PC-3 (cell line): ENCODE measurements at regions of chr10 and their contacts with region 1.

Region 1: DNA sequence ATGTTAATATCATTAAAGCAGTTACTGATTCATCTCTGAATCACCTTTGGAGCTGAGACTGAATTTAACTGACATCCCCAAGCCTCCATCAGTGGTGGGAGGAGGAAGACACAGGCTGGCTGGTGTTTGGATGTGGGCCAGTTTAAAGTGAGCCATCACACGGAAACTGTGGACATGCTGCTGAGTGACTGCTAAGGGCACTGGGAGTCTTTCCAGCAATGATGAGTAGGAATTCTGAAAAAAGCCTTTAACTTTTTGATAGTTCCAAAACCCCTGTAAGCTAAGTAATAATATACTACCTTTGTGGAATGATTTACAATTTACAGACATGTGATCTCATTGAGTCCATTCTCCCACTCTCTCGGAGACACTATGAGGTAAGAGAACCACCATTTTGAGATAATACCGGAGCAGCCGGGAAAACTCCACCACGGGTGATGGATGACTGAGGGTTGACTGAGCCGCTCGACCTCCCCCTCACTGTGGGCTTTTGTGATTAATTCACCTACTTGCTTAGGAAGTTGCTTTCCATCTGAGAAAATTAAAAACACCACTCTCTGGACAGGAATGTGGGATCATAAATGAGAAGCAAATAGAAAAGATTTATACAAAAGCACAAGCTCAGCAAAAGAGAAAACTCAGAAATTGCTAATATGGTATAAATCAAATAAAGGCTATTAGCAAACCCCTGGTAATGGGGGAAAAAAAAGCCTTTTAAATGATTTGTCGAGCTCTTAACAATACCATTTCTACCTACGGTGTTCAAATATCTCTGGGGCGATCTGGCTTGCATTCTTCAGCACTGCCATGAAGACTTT is 194.8 kb downstream of the FANK1 start:
- DNase-seq: peak; percentile 94
- ATAC-seq: peak; percentile 88
- H3K4me3 ChIP-seq: peak overlapping the region; percentile 36; the same call in 1 of the 2 replicates
- H3K27ac ChIP-seq: peak overlapping the region; percentile 98
- H3K4me1 ChIP-seq: peaks cover 56% of the 10 kb centered on the region
- H3K27me3 ChIP-seq: no peaks in the 10 kb centered on the region
- CTCF ChIP-seq: no peak

Region 2: GRCh38 chr10:125940515-125940914 is 150.6 kb before region 1 on chr10:
- CTCF ChIA-PET with region 1: no interaction called
- POLR2A ChIA-PET with region 1: no interaction called
- intact Hi-C with region 1: no loop called
- DNase-seq: no peak
- ATAC-seq: no peak
- H3K4me3 ChIP-seq: no peak overlapping the region
- H3K27ac ChIP-seq: no peak overlapping the region
- H3K4me1 ChIP-seq: 0 out of 2 replicates have a peak, but pooled peaks cover 3% of the 10 kb centered on the region
- H3K27me3 ChIP-seq: no peaks in the 10 kb centered on the region
- CTCF ChIP-seq: no peak

Region 3: DNA sequence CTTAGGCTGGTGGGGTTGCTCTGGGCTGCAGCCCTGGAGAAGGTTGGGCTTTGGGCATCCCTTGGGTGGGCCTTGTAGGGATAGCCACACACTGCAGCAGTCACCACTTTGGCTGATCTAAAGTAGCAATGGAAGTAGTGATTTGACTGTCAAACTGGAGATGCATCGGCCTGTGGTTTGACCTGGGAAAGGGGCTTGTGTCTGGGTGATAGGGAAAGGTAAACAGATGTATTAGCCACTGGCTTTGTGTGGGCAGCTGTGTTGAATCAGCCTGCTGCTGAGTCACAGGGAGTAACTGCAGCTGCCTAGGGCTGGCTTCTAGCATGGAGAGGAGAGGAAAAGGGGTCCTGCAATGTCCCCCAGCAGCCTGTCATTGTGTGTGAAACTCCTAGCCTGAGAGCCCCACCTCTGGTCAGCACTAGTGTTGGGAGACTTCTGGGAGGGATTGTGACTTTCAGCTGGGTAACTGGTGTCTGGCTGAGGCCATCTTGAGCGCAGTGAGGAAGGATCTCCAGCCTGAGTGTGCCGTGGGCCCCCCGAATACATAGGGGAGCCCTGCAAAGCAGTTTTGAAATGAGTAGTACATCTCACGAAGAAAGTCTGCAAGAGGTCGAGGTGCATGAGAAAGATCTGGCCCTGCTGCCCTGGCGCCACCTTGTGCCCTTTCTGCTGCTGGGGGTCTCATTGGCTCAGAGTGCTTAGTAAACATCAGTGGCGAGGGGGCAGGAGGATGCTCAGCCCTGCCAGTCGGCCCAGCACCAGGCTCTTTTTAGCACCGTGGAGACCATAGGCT is 77.4 kb before region 1 on chr10:
- CTCF ChIA-PET with region 1: no interaction called
- POLR2A ChIA-PET with region 1: no interaction called
- intact Hi-C with region 1: loop called (anchors 10 kb)
- DNase-seq: peak; percentile 80
- ATAC-seq: peak; percentile 92
- H3K4me3 ChIP-seq: peak overlapping the region; percentile 43
- H3K27ac ChIP-seq: peak overlapping the region; percentile 98
- H3K4me1 ChIP-seq: peaks cover 32% of the 10 kb centered on the region
- H3K27me3 ChIP-seq: no peaks in the 10 kb centered on the region
- CTCF ChIP-seq: peak; percentile 27; the same call in 1 of the 2 replicates

Region 4: GRCh38 chr10:126062131-126062981 is 28.8 kb before region 1 on chr10:
- CTCF ChIA-PET with region 1: no interaction called
- POLR2A ChIA-PET with region 1: no interaction called
- intact Hi-C with region 1: loop called (anchors 2 kb)
- DNase-seq: peak; percentile 95
- ATAC-seq: peak; percentile 66
- H3K4me3 ChIP-seq: peak overlapping the region; percentile 5; the same call in 1 of the 2 replicates
- H3K27ac ChIP-seq: peak overlapping the region; percentile 98
- H3K4me1 ChIP-seq: peaks cover 81% of the 10 kb centered on the region
- H3K27me3 ChIP-seq: no peaks in the 10 kb centered on the region
- CTCF ChIP-seq: no peak

Region 5: GRCh38 chr10:126215732-126216631 is 124.9 kb after region 1 on chr10:
- CTCF ChIA-PET with region 1: no interaction called
- POLR2A ChIA-PET with region 1: no interaction called
- intact Hi-C with region 1: no loop called
- DNase-seq: no peak
- ATAC-seq: no peak
- H3K4me3 ChIP-seq: no peak overlapping the region
- H3K27ac ChIP-seq: no peak overlapping the region
- H3K4me1 ChIP-seq: no peaks in the 10 kb centered on the region
- H3K27me3 ChIP-seq: no peaks in the 10 kb centered on the region
- CTCF ChIP-seq: no peak

Region 6: DNA sequence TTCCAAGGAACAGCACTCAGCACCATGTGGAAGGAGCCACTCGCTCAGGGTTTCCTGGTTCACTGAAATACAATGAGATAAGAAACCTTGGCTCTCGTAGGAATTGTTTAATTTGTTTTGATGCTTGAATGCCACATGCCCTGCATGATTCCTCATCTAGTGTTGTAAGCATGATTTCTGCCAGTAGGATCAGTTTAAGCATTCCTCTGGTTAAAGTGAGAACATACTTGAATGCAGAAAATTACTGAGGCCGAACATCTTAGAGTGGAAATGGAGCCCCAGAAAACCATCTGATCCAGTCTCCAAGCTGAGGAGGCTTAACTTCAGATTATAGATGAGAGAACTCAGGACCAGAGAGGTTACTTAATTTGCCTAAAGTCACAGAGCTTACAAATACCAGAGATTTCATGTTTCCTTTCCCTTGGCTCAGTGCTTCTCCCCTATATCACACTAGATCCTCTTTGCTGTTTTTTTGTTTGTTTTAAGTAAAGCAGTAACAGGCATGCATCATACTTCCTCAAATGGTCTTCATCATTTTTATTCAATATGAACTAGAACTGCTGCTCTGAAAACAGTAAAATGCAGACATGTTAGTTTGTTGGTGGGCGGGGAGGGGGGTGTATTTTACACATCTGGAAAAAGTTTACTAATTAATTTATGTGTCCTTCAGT is 172.0 kb after region 1 on chr10:
- CTCF ChIA-PET with region 1: no interaction called
- POLR2A ChIA-PET with region 1: no interaction called
- intact Hi-C with region 1: no loop called
- DNase-seq: no peak
- ATAC-seq: no peak
- H3K4me3 ChIP-seq: no peak overlapping the region
- H3K27ac ChIP-seq: no peak overlapping the region
- H3K4me1 ChIP-seq: peaks cover 24% of the 10 kb centered on the region; the same call in 1 of the 2 replicates
- H3K27me3 ChIP-seq: no peaks in the 10 kb centered on the region
- CTCF ChIP-seq: no peak

Region 7: GRCh38 chr10:126379728-126380127 is 288.6 kb after region 1 on chr10:
- CTCF ChIA-PET with region 1: no interaction called
- POLR2A ChIA-PET with region 1: no interaction called
- intact Hi-C with region 1: no loop called
- DNase-seq: no peak
- ATAC-seq: no peak
- H3K4me3 ChIP-seq: no peak overlapping the region
- H3K27ac ChIP-seq: no peak overlapping the region
- H3K4me1 ChIP-seq: peaks cover 40% of the 10 kb centered on the region
- H3K27me3 ChIP-seq: no peaks in the 10 kb centered on the region
- CTCF ChIP-seq: no peak